Gastrocnemius medialis (tissue), 4 donors: ENCODE measurements at regions of chr17 and their contacts with region 1.

Region 1: DNA sequence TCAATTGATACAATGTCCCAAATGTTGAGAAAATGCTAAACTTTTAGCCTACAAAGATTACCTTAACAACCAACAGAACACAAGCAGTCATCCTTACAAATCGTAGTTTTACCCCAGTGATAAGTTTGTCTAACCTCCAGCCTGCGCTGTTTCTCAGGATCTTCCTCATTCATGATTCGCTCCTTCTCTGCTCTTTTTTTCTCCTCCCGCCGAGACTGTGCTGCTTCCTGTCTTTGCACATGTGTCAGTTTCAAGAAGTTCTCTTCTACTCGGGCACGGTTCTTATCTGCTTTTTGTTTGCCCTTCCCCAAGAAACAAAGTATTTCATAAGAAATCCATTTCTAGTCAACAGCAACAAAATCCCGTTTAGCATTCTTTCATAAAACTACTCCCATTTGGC is 10.2 kb upstream of the STRADA start:
- DNase-seq: no peak
- ATAC-seq: no peak
- H3K4me3 ChIP-seq: no peak overlapping the region
- H3K27ac ChIP-seq: no peak overlapping the region
- H3K4me1 ChIP-seq: no peaks in the 10 kb centered on the region
- H3K27me3 ChIP-seq: no peaks in the 10 kb centered on the region
- CTCF ChIP-seq: no peak
- POLR2A ChIP-seq: no peak

Region 2: DNA sequence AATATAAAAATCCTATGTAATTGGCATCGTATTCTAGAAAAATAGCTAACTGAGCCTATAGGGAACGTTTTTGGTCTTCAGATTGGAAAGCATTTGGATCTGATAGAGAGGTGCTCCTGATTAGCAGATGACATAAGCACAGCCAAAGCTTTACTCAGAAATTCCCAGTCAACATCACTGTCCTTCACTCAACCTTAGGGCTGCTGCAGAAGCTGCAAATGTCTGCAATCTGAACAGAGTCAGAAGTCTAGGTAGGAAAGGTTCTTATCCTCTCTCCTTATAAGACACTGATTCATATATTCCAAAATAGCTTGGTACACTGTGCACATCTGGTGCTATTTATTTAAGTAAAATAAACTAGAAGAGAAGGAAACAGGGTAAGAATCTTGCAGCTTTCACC is 29.4 kb before region 1 on chr17:
- in situ Hi-C with region 1: no loop called
- intact Hi-C with region 1: loop called (anchors 1 kb)
- DNase-seq: no peak
- ATAC-seq: no peak
- H3K4me3 ChIP-seq: no peak overlapping the region
- H3K27ac ChIP-seq: no peak overlapping the region
- H3K4me1 ChIP-seq: no peaks in the 10 kb centered on the region
- H3K27me3 ChIP-seq: no peaks in the 10 kb centered on the region
- CTCF ChIP-seq: no peak
- POLR2A ChIP-seq: no peak

Region 3: DNA sequence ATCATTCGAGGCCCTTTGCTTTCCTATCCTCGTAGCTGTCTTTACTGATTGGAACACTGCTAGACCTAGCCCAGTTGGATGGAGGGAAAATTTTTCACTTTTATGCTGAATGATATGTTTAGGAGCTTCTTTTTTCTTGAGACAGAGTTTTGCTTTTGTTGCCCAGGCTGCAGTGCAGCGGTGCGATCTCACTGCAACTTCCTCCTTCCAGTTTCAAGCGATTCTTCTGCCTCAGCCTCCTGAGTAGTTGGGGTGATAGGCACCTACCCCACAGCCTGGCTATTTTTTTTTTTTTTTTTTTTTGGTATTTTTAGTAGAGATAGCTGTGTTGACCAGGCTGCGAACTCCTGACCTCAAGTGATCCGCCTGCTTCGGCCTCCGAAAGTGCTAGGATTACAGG is 58.2 kb after region 1 on chr17:
- in situ Hi-C with region 1: no loop called
- intact Hi-C with region 1: loop called (anchors 10 kb)
- DNase-seq: no peak
- ATAC-seq: no peak
- H3K4me3 ChIP-seq: no peak overlapping the region
- H3K27ac ChIP-seq: no peak overlapping the region
- H3K4me1 ChIP-seq: no peaks in the 10 kb centered on the region
- H3K27me3 ChIP-seq: no peaks in the 10 kb centered on the region
- CTCF ChIP-seq: no peak
- POLR2A ChIP-seq: no peak

Region 4: GRCh38 chr17:63820963-63821589 is 69.3 kb after region 1 on chr17:
- in situ Hi-C with region 1: no loop called
- intact Hi-C with region 1: no loop called
- DNase-seq: no peak
- ATAC-seq: no peak
- H3K4me3 ChIP-seq: no peak overlapping the region
- H3K27ac ChIP-seq: peak overlapping the region in 3 of 4 donors; percentile 53 to 76 (median 56)
- H3K4me1 ChIP-seq: peaks cover 9 to 13% of the 10 kb centered on the region in 2 donors
- H3K27me3 ChIP-seq: no peaks in the 10 kb centered on the region
- CTCF ChIP-seq: no peak
- POLR2A ChIP-seq: no peak